CD4-positive, alpha-beta memory T cell (primary cell): ENCODE measurements at regions of chr3 and their contacts with region 1.

Region 1: DNA sequence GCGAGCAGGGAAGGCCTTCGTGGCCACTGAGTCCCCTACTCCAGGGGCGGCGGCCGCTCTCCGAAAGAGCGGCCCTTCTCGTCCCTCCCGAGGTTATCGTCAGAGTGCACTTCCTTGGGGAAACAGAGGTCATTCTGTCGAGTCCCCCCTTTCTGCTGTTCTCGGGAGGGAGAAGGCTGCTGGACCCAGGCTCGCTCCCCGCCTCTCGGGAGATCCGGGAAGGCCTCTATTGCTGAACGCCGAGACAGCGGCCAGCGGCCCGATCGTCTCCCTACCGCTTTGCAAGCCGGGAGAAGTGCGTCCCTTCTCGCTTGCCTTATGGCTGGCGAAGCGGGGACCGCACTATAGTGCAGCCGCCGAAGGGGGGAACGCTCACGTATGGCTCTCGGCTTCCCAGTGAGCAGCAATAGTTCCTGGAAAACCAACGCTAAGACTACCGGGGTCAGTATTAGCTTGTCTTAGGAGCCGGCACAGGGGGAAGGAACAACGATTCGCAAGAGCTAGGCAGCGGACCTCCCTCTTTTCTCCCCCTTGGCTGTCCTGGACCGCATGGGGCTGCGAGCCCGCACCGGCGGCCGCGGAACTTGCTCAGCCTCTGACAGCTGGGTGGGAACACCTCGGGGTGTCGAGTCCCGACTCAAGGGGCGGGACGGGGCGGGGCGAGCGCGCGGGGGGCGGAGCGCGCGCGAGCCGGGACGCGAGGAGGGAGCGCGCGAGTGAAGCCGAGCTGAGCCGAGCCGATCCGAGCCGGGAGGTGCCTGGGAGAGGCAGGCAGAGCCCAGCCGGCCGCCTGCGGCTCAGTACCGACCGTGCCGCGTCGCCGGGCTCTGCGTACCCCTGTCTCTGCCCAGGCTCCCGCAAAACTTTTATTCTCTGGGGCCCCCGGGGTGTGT is 930 bp upstream of the PPM1L start:
- DNase-seq: peak; percentile 86 to 89 (median 88)
- H3K4me3 ChIP-seq: peak overlapping the region; percentile 67 to 96
- H3K4me3 Mint-ChIP-seq: peak overlapping the region; percentile 91 to 98 (median 94)
- H3K27ac ChIP-seq: peak overlapping the region; percentile 69
- H3K27ac Mint-ChIP-seq: peak overlapping the region; percentile 94 to 98 (median 97)
- H3K4me1 ChIP-seq: peaks cover 24% of the 10 kb centered on the region
- H3K4me1 Mint-ChIP-seq: peaks cover 17 to 37% (median 27%) of the 10 kb centered on the region in 4 donors
- H3K27me3 ChIP-seq: no peaks in the 10 kb centered on the region
- H3K27me3 Mint-ChIP-seq: peaks cover 0 to 5% of the 10 kb centered on the region in 2 donors

Region 2: DNA sequence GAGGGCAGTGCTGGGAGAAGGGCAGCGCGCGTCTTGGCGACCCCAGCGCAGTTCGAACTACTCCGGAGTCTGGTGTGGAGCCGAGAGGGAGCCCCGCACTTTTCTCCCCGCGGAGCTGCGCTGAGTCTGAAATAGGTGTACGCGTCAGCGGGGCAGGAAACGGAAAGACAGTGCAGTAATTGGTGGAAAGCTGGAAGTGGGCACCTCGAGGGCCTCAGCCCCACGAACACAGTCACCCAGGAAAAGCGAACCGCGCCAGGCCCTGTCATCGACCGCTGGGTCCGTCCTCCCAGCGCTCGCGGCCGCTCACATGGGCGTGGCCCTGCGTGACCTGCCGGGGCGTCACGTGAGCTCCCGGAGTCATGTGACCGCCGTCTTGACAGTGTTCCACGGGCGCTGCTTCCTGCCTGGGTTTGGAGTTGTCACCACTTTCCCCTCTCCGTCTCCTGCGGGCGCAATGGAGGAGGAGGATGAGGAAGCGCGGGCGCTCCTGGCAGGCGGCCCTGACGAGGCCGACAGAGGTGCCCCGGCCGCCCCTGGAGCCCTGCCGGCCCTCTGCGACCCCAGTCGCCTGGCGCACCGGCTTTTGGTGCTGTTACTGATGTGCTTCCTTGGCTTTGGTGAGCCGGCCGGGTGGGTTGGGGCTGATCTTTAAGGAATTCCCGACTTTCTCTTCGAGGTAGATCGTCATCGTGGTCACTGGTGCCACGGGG is 1953.2 kb before region 1 on chr3 and contains the start of gene MFSD1:
- CTCF ChIA-PET with region 1: no interaction called
- POLR2A ChIA-PET with region 1: interaction called, 3 read pairs
- intact Hi-C with region 1: loop called (anchors 10 kb)
- DNase-seq: peak; percentile 86 to 92 (median 88)
- H3K4me3 ChIP-seq: peak within 1 kb of the TSS; percentile 68 to 98
- H3K4me3 Mint-ChIP-seq: peak within 1 kb of the TSS; percentile 89 to 93 (median 92)
- H3K27ac ChIP-seq: peak within 1 kb of the TSS; percentile 63
- H3K27ac Mint-ChIP-seq: peak within 1 kb of the TSS; percentile 71 to 97 (median 94)
- H3K4me1 ChIP-seq: peaks cover 36% of the 10 kb centered on the region
- H3K4me1 Mint-ChIP-seq: peaks cover 24 to 41% (median 35%) of the 10 kb centered on the region in 4 donors
- H3K27me3 ChIP-seq: no peaks in the 10 kb centered on the region
- H3K27me3 Mint-ChIP-seq: no peaks in the 10 kb centered on the region
- total RNA-seq, gene MFSD1: 31.7 to 33.7 TPM

Region 3: DNA sequence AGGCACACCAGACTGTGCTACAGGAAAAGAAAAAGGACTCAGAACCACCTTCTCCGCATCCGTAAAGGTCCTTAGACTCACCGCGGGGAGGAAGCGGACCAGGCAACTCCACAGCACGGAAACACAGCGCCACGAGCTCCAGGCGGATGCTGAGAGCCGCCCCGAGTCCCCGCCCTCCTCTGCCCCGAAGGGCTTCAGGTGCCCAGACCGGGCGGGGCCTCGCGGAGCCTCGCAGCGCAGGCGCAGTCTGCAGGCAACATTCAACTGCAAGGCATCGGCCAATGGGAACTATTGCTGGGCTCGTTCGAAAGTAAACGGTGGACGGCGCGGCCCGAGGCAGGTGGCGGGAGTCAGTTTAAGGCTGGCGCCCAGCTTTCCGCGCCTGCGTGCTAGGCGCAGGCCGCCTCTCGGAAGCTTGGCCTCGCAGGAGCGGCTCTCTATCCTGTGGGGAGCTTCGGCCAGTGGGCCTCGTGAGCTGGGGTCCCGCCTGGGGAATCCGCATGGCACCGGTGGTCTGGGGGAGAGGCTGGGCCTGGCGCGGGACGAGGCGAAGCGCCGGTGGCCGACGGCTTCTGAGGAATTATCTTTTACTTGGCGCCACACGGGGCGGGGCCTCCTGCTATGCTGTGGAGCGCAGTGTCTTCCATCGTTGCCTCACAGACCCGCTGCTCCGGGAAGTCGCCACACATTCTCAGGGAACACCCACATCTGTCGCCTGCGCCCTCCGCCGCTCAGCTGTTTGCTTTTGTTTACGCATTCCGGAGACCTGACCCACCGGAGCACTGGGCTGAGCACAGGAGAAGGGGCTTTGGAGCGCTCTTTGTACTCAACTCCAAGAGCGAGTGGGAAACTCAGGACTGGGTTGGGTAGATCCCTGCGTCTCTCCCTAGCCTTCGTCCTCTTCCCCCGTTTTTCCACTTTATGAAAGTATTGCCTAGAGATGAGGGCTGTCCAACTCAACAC is 305.2 kb before region 1 on chr3 and contains the start of gene TRIM59:
- CTCF ChIA-PET with region 1: interaction called, 3 read pairs
- POLR2A ChIA-PET with region 1: interaction called, 11 read pairs
- intact Hi-C with region 1: loop called (anchors 1 kb)
- DNase-seq: peak; percentile 93 to 98 (median 97)
- H3K4me3 ChIP-seq: peak within 1 kb of the TSS; percentile 82 to 91
- H3K4me3 Mint-ChIP-seq: peak within 1 kb of the TSS; percentile 93 to 100 (median 98)
- H3K27ac ChIP-seq: peak within 1 kb of the TSS; percentile 81
- H3K27ac Mint-ChIP-seq: peak within 1 kb of the TSS; percentile 92 to 99 (median 97)
- H3K4me1 ChIP-seq: peaks cover 35% of the 10 kb centered on the region
- H3K4me1 Mint-ChIP-seq: peaks cover 18 to 48% (median 33%) of the 10 kb centered on the region in 4 donors
- H3K27me3 ChIP-seq: no peaks in the 10 kb centered on the region
- H3K27me3 Mint-ChIP-seq: no peaks in the 10 kb centered on the region
- total RNA-seq, gene TRIM59: 26.3 to 28.3 TPM

Region 4: GRCh38 chr3:160707187-160707794 is 47.8 kb before region 1 on chr3:
- CTCF ChIA-PET with region 1: no interaction called
- POLR2A ChIA-PET with region 1: no interaction called
- intact Hi-C with region 1: no loop called
- DNase-seq: peak in 4 of 5 donors; percentile 36 to 44 (median 40)
- H3K4me3 ChIP-seq: no peak overlapping the region
- H3K4me3 Mint-ChIP-seq: no peak overlapping the region
- H3K27ac ChIP-seq: no peak overlapping the region
- H3K27ac Mint-ChIP-seq: no peak overlapping the region
- H3K4me1 ChIP-seq: no peaks in the 10 kb centered on the region
- H3K4me1 Mint-ChIP-seq: no peaks in the 10 kb centered on the region
- H3K27me3 ChIP-seq: no peaks in the 10 kb centered on the region
- H3K27me3 Mint-ChIP-seq: peaks cover 24 to 36% of the 10 kb centered on the region in 2 donors